Mammary epithelial cell (primary cell): ENCODE measurements at regions of chr22 and their contacts with region 1.

Region 1: DNA sequence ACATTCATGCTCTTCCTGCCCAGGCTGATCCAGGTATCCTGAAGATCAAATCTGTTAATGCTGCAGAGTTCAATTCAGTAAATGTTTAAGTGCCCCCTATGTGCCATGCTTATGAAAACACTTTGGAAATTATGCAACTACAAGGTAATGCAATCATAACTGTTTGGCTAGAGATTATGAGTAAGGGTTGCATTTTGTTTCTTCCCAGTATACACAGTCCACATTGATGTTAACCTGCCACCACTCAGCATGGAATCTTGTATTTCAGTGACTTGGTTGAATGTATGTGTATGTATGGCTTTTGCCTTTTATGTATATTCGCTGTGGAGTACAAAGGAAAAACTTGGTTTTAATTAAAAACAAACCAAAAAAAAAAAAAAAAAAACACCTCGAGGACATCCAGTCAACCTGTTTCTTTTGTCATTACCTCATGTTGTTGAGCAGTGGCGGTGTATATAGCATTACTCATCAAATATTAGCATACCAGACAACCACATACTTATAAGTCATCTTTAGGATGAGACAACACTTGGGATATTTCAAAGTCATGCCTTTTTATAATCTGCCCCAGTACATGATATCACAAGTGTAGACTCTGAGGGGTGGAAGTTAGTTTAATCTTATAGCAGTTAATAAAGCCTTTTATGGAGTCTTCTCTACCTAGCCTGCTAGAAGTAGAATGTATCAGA is 86.1 kb upstream of the HORMAD2 start:
- DNase-seq: peak; percentile 89
- H3K4me3 ChIP-seq: no peak overlapping the region
- H3K27ac ChIP-seq: peak overlapping the region; percentile 81
- H3K4me1 ChIP-seq: peaks cover 36% of the 10 kb centered on the region
- H3K27me3 ChIP-seq: no peaks in the 10 kb centered on the region
- CTCF ChIP-seq: peak; percentile 31 to 58

Region 2: GRCh38 chr22:29766632-29767170 is 227.5 kb before region 1 on chr22 and contains the start of gene ZMAT5:
- CTCF ChIA-PET with region 1: no interaction called
- dilution Hi-C with region 1: no loop called
- in situ Hi-C with region 1: no loop called
- intact Hi-C with region 1: loop called (anchors 2 kb)
- DNase-seq: peak; percentile 97
- H3K4me3 ChIP-seq: peak within 1 kb of the TSS; percentile 72 to 97 (median 80)
- H3K27ac ChIP-seq: peak within 1 kb of the TSS; percentile 82
- H3K4me1 ChIP-seq: peaks cover 12% of the 10 kb centered on the region
- H3K27me3 ChIP-seq: no peaks in the 10 kb centered on the region
- CTCF ChIP-seq: no peak
- total RNA-seq, gene ZMAT5: 15.3 to 15.5 TPM

Region 3: GRCh38 chr22:29772170-29772641 is 222.0 kb before region 1 on chr22:
- CTCF ChIA-PET with region 1: interaction called, 22 read pairs
- dilution Hi-C with region 1: no loop called
- in situ Hi-C with region 1: no loop called
- intact Hi-C with region 1: loop called (anchors 2 kb)
- DNase-seq: no peak
- H3K4me3 ChIP-seq: no peak overlapping the region
- H3K27ac ChIP-seq: no peak overlapping the region
- H3K4me1 ChIP-seq: peaks cover 16% of the 10 kb centered on the region
- H3K27me3 ChIP-seq: no peaks in the 10 kb centered on the region
- CTCF ChIP-seq: peak; percentile 53 to 58

Region 4: DNA sequence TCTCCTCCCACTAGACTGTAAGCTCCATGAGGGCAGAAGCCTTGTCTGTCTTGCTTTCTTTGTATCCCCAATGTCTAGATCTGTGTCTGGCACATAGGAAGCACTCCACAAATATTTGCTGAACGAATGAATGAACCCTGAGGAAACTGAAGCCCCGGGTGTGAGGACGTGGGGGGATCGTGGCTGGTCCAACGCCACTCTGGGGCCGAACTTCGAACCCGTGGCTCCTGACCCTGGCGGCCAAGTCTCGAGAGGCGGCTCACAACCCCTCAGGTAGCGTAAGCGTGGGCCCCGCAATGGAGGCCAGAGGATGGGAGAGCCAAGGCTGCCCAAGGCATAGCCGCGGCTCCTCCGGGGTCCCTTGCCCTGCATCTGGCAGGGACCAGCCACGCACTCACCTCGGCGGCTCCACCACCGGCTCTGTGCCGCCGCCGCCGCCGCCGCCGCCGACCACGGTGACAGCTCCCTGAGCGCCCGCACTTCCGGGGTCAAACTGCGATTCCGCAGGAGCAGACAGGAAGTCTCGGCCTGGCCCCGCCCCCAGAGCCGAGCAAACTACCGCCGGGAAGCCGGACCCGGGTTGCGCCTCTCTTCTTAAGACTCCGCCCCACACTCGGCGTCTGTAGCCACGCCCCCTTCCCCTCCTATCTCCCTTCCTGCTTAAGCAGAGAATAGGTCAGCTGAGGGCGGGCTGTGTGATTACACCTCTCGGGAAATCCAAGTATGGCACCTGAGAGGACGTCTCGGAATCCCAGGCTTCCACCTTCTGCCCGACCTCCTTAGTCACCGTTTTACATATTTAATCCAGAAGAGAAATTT is 156.2 kb before region 1 on chr22 and contains the start of gene ASCC2:
- CTCF ChIA-PET with region 1: no interaction called
- dilution Hi-C with region 1: no loop called
- in situ Hi-C with region 1: no loop called
- intact Hi-C with region 1: loop called (anchors 1 kb)
- DNase-seq: peak; percentile 98
- H3K4me3 ChIP-seq: peak within 1 kb of the TSS; percentile 86 to 96 (median 91)
- H3K27ac ChIP-seq: peak within 1 kb of the TSS; percentile 67
- H3K4me1 ChIP-seq: peaks cover 24% of the 10 kb centered on the region
- H3K27me3 ChIP-seq: no peaks in the 10 kb centered on the region
- CTCF ChIP-seq: no peak
- total RNA-seq, gene ASCC2: 41.3 to 72.2 TPM

Region 5: DNA sequence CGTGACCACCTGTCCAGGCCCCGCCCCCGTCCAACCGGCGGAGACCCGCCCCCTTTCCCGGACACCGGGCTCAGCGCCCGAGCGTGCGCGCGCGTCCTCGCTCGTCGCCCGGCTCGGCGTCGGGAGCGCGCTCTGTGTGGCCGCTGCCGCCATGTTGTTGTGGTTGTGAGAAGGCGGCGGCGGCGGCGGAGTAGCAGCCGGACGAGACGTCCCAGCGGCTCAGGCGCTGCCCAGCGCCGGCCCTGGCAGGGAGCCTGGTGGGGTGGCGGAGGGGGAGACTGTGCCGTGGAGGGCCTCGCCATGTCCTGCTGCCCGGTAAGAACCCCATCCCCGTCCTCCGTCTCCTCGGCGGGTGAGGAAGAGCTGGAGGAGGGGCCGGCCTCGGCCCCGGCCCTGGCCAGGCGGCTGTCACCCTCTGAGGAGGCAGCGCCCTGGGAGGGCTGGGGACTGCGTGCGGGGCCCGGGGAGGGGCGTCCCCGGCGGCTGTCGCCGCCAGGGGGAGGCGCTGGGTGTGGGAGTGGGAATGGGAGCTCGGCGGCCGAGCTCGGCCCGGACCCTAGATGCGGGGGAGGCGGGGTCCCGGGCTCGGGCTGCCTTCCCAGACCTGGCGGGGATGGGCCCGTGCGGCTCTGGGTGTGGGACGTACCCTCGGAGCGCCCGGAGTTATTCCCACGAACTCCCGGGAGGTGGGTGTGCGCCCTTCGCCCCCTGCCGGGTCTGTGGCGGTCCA is 111.0 kb before region 1 on chr22 and contains the start of gene MTMR3:
- CTCF ChIA-PET with region 1: no interaction called
- dilution Hi-C with region 1: no loop called
- in situ Hi-C with region 1: no loop called
- intact Hi-C with region 1: loop called (anchors 1 kb)
- DNase-seq: peak; percentile 91
- H3K4me3 ChIP-seq: peak within 1 kb of the TSS; percentile 74 to 99 (median 87)
- H3K27ac ChIP-seq: peak within 1 kb of the TSS; percentile 71
- H3K4me1 ChIP-seq: no peaks in the 10 kb centered on the region
- H3K27me3 ChIP-seq: no peaks in the 10 kb centered on the region
- CTCF ChIP-seq: peak in 1 of 2 donors; percentile 43
- total RNA-seq, gene MTMR3: 34.1 to 67.2 TPM

Region 6: DNA sequence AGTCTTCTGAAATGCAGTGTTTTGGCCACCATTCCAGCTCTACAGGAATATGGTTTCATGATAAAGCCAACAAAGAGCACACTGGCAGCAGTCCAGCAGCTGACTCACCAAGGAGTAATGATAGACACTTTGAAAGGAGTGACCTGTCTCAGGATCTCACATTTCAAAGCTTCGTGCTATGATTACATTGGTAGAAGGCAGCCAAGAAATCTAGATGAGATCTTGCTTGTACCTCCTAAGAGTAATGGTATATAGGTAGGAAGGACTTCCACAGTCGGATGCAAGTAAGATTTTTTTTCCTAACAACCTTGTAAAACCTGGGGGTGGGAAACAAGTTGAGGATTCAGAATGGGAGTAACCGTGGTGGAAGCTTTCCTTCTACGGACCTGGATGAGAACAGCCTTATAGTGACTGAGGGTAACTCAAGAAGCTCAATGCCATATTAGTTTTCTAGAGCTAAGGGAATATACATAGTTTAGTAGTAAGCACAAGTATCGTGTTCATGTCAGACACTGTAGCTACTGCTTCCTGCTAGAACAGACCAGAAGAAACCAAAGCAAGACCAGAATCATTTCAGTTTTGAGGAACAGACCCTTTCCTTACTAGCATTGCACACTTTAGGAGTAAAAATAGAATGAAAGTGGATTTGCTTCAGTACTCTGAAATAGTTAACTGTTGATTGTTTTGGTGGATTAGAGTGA is 86.2 kb before region 1 on chr22:
- CTCF ChIA-PET with region 1: no interaction called
- dilution Hi-C with region 1: no loop called
- in situ Hi-C with region 1: no loop called
- intact Hi-C with region 1: loop called (anchors 5 kb)
- DNase-seq: peak; percentile 94
- H3K4me3 ChIP-seq: no peak overlapping the region
- H3K27ac ChIP-seq: peak overlapping the region; percentile 42
- H3K4me1 ChIP-seq: peaks cover 20% of the 10 kb centered on the region
- H3K27me3 ChIP-seq: no peaks in the 10 kb centered on the region
- CTCF ChIP-seq: no peak

Region 7: DNA sequence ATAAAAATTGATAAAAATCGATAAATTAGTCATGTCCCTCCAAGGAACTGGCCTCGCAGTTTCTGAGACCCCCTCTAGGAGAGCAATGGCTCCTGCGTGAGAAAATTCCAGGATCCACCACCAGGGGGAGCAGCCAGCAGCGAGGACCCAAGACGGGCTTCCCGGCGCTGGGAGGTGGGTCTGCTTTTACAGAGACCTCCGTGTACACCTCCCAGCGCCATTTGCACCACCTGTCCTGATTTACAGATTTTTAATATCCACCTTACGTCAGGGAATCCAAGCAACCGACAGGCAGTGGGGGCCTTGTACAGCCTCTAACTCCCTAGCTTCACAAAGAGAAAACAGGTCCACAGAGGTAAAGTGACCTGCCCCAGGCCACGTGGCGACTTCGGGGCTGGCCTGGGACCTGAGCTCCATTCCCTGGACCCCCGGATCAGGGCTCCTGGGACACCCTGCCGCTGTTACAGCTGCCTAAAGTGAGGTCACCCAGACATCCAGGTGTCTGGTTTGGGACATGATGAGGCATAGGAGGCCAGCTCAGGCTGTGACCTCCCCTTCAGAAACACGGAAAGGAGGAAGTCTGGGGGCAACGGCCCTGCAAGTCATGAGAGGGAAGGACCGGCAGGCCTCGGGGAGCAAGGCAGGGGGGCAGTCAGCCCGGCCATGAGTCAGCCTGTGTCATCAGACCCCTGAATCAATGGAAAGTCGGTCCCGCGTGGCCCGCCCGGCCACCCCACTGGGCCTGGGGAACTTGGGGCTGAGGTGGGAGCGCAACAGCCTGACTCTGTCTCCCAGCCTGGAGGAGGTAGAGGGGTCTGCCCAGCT is 269.0 kb after region 1 on chr22:
- CTCF ChIA-PET with region 1: no interaction called
- dilution Hi-C with region 1: no loop called
- in situ Hi-C with region 1: no loop called
- intact Hi-C with region 1: no loop called
- DNase-seq: no peak
- H3K4me3 ChIP-seq: no peak overlapping the region
- H3K27ac ChIP-seq: peak overlapping the region; percentile 62
- H3K4me1 ChIP-seq: peaks cover 15% of the 10 kb centered on the region
- H3K27me3 ChIP-seq: no peaks in the 10 kb centered on the region
- CTCF ChIP-seq: peak; percentile 90 to 96